Motor neuron (in vitro differentiated cells): ENCODE measurements at regions of chr14 and their contacts with region 1.

Region 1: DNA sequence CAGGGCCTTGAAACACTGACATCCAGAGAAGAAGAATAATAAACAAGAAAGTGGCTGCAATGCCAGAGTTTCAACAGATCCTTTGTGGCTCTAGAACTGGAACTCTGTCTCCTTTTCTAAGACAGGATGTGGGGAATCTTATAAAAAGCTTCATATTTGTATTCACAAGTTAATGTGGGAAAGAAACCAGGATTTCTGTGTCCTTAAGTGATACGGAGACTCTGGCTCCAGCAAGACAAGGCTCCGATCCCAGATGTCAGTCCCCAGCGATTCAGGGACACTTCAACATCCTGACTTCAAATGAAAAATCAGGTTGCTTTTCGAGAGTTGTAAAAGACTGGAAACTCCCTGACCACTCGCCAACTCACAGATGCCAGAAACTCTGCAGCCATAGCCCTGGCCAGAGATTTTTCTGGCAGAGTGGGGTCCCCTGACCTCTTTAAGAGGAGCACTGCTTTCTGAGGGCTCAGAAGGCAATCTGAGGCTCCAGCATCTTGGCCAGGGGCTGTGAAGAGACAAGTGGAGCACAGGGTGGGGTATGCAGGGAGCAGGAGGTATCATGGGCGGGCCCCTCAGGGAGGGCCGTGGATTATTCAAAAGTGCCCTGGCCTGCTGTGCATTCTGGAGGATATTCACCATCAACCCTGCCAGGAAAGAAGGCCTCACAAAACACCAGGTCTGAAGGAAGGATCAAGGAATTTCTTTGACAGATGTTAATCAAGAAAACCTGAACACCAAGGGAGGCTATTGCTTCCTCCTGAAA is 53.3 kb downstream of the TMX1 start:
- ATAC-seq: peak in 3 of 8 experiments; percentile 90 to 95 (median 94)
- H3K4me3 ChIP-seq: no peak overlapping the region
- H3K27ac ChIP-seq: no peak overlapping the region
- H3K4me1 ChIP-seq: peaks cover 6 to 16% of the 10 kb centered on the region in 2 donors

Region 2: GRCh38 chr14:51780006-51780692 is 486.8 kb after region 1 on chr14:
- in situ Hi-C with region 1: loop called (anchors 10 to 25 kb)
- ATAC-seq: peak; percentile 65 to 81 (median 74)
- H3K4me3 ChIP-seq: no peak overlapping the region
- H3K27ac ChIP-seq: no peak overlapping the region
- H3K4me1 ChIP-seq: peaks cover 3 to 7% of the 10 kb centered on the region in 2 donors

Region 3: DNA sequence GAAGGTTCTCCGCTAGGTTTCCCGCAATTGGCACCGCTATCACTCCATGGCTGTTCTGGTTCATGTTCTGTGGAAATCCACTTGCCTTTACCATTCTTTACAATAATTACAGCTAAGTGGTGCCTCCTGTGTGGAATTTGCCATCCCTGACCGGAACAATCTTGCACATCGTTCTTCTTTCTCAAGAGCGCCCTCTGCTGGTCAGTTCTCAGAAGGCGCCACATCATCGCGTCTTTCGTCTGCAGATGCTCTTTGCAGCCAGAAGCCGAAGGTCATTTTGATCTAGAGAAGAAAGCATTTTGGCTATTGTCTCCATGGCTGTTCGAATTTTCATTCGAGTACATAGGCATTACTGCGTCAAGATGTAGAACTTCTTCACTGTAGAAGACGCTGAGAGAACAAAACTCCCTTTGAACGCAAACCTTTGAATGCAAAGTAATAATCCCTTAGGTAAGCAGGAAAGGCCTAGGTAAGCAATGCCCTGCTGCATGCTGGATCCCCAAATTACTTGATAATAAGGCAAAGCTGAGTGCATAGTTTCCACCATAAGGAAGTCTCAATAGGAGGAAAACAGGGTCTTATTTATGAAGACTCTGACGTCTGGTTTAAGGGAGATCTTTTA is 685.9 kb after region 1 on chr14:
- in situ Hi-C with region 1: loop called in 6 of 9 experiments (anchors 10 to 25 kb)
- ATAC-seq: peak; percentile 69 to 94 (median 87)
- H3K4me3 ChIP-seq: no peak overlapping the region
- H3K27ac ChIP-seq: no peak overlapping the region
- H3K4me1 ChIP-seq: peaks cover 9% of the 10 kb centered on the region in 2 donors